ENCODE measurements at regions of chr3 and their contacts with region 1.

Region 1: DNA sequence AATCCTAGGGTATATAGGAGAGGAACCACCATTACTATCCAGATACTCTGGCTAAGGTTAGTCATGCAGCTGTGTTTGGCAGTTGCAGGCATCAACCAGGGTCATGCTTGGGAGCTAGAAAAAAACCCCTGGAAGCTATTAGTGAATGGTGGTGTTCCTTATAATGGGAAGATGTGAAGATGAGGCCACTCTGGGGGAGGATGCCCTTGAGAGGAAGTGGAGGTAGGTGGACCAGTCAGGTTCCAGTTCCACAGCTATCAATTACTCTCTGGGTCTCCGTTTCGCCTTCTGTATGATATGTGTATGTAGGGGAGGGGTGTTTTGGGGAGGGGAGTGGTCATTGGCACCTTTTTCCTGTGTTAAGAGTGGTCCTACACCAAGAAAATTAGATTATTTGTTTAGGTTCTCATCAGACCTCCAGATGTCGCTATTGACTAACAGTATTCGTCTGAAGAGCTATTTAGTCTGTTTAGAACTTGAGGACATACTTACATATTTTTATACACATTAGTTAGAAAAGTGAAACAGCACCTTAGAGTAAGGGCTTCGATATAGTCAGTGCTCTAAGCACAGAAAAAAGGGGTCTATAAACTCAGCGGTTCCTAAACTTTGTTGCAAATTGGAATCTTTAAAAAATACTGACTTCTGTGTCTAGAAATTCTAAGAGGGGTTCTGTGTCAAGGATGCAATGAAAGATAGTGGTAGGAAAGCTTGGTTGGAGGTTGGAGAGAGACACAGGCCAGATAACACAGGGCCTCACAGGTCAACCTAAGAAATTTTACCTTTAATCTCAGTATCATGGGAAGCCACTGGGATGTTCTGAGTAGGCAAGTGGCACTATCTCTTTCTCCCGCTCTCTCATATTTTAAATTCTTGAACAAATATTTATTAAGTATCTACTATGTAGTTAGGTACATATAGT is 9.1 kb upstream of the HPS3 start:
- H3K4me3 ChIP-seq: no peak overlapping the region
- H3K27ac ChIP-seq: no peak overlapping the region
- H3K4me1 ChIP-seq: no peaks in the 10 kb centered on the region
- CTCF ChIP-seq: peak; percentile 51; the same call in 1 of the 2 replicates

Region 2: DNA sequence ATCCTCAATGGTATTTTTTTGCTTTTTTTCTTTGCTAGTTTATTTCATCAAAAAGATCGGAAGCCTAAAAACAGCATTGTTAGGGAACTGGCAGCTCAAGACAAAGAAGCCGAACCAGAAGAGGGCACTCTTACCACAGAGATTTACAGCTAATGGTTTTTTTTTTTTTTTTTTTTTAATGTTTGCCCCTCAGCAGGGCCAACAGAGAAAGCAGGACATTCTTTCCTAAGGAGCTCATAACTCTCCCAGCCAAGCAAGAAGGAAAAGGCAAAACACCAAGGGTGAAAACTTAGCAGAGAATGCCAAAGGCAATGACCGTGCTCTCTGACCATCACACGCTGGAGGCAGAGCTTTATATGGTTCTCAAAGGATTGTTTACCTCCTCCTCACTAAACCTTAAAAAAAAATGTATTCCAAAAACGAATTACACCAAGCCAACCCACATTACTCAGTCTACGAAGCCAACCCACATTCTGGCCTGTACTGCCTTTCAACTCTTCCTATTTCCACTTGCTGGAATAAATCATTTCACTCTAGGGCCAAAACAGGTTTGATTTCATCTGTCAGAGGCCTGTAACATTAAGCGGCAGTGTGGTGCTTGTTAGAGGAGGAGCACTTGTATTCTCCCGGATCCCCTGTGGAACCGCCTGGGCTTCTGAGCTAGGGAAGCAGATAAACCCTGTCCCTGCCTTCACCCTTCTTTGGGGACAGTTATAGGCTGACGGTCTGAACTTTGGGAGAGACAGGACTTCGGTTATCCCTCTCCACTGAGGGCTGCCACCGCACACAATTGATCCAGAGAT is 164.6 kb before region 1 on chr3:
- CTCF ChIA-PET with region 1: interaction called, 22 read pairs
- POLR2A ChIA-PET with region 1: interaction called, 3 read pairs
- H3K4me3 ChIP-seq: no peak overlapping the region
- H3K27ac ChIP-seq: no peak overlapping the region
- H3K4me1 ChIP-seq: no peaks in the 10 kb centered on the region
- CTCF ChIP-seq: 0 out of 2 replicates have a peak, but pooled peaks have one; percentile 29

Region 3: GRCh38 chr3:149058602-149059001 is 61.7 kb before region 1 on chr3:
- CTCF ChIA-PET with region 1: no interaction called
- POLR2A ChIA-PET with region 1: no interaction called
- H3K4me3 ChIP-seq: no peak overlapping the region
- H3K27ac ChIP-seq: no peak overlapping the region
- H3K4me1 ChIP-seq: no peaks in the 10 kb centered on the region
- CTCF ChIP-seq: no peak

Region 4: DNA sequence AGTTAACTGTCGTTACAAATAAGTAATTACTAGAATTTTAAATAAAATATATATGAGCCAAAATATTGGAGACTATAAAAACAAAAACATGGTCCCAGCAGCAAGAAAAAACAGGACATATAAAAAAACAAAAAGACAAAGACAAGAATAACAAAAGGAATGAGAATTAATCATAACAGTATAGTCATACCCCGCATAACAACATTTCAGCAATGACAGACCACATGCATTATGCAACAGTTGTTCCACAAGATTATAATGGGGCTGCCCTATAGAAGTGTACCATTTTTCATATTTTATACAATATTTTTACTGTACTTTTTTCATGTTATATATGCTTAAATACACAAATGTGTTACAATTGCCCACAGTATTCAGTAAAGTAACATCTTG is 39.6 kb before region 1 on chr3:
- CTCF ChIA-PET with region 1: no interaction called
- POLR2A ChIA-PET with region 1: no interaction called
- H3K4me3 ChIP-seq: no peak overlapping the region
- H3K27ac ChIP-seq: no peak overlapping the region
- H3K4me1 ChIP-seq: no peaks in the 10 kb centered on the region
- CTCF ChIP-seq: no peak

Region 5: DNA sequence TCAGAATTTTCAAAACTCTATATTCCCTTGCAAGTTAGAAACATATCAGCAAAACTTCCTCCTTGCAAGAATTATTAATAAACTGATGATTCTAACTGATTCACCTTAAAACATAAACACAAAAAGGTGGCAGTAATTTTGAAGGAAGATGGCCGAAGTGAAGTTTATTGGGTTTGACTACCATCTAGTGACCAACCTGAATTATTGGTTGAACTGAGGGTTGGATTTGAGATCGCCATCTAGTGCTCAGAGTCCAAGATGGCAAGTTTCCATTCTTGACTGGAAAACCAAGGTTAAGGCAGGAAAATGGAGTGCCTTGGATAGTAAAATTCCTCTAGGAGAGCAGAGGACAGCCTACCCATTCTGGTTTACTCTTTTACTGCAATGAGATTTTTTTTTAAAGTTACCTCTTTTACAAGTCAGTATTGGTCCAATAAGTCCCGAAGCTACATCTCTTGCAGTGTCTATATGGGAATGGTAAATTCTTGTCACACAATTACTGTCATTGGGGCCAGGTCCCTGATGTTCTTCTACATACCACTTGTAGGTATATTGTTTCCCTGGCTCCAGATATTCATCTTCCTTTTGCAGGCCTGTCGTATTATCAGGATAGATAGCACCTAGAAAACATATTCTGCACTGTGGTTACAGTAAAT is 152.9 kb after region 1 on chr3:
- CTCF ChIA-PET with region 1: interaction called, 42 read pairs
- POLR2A ChIA-PET with region 1: no interaction called
- H3K4me3 ChIP-seq: no peak overlapping the region
- H3K27ac ChIP-seq: no peak overlapping the region
- H3K4me1 ChIP-seq: no peaks in the 10 kb centered on the region
- CTCF ChIP-seq: peak; percentile 86

Region 6: DNA sequence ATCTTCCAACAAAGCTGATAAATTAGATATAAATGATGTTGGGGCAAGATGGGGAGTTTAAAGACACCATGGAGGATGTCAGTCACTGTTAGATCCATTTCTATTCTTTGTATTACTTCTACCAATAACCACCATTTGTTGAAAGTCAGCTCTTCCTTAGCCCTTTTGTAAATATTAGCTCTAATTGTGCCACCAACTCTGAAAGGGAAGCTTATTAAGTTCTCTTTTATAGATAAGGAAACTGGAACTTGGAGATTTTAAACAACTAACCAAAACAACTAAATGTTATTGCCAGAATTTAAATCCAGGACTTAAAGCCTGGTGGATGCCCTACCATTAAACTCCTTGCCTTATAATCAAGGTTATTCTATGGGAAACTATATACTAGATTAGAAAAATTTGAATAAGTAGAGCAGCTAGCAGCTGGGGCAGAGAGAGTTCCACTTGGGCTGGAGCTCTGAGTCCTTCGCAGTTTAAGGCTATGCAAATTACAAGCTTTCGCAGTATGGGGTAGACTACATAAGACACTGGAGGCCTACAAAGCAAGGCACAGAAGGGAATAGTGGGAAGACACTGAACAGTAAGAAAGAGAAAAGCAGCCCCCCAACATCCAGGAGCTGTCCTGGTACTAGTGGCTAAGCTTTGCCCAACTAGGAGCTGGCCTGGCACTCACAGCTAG is 160.5 kb after region 1 on chr3:
- CTCF ChIA-PET with region 1: interaction called, 32 read pairs
- POLR2A ChIA-PET with region 1: no interaction called
- H3K4me3 ChIP-seq: no peak overlapping the region
- H3K27ac ChIP-seq: no peak overlapping the region
- H3K4me1 ChIP-seq: no peaks in the 10 kb centered on the region
- CTCF ChIP-seq: no peak